Esophagus muscularis mucosa (tissue), 4 donors: ENCODE measurements at regions of chr2 and their contacts with region 1.

Region 1: DNA sequence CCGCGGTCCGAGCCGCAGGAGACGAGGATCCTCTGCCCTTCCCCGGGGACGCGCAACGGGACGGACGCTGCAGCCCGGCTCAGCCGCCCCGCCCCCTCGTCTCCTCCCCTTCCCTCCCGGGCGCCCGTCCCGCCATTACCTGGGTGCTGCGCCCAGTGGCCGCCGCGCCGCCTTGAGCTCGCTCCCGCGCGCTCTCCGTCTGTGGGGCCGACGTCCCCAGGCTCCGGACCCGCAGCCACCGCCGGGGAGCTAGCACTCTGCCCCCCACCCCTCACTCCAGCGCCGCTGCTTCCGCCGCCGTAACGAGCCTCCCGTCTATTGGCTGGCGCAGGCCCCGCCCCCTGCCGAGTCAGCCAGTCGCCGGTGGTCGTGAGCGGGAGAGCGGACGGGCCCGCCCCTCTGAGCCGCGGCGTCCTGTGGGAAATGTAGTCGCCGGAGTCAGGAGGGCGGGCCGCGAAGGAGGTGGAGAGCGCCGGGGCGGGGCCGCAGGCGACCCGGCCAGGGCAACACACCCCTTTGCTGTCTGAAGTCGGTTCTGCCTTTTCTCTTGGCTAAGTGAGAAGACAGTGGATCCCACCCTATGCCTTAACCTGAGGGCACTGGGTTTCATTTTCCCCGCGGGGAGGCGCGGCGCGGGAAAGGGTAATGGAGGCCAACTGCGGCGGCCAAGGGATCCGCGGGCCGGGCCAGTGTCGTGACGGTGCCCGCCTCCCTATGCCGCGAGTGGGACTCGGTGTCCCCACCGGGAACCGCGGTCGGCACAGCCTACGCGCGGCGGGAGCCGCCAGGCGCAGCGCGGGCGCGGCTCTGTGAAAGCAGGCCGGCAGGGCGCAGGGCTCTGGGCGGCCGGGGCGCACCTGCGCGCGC is at the start of gene SAP130:
- DNase-seq: peak; percentile 99
- H3K4me3 ChIP-seq: peak within 1 kb of the TSS; percentile 87 to 98 (median 95)
- H3K27ac ChIP-seq: peak within 1 kb of the TSS; percentile 95 to 99 (median 96)
- H3K4me1 ChIP-seq: peaks cover 12 to 26% (median 21%) of the 10 kb centered on the region in 4 donors
- H3K27me3 ChIP-seq: peaks cover 0 to 4% (median 0%) of the 10 kb centered on the region in 4 donors
- CTCF ChIP-seq: no peak
- EP300 ChIP-seq: no peak
- POLR2A ChIP-seq: peak; percentile 34
- total RNA-seq, gene SAP130: 6.8 to 12.3 (median 10.7) TPM

Region 2: GRCh38 chr2:127884436-127885345 is 143.3 kb before region 1 on chr2:
- intact Hi-C with region 1: loop called (anchors 5 kb)
- DNase-seq: no peak
- H3K4me3 ChIP-seq: peak overlapping the region; percentile 66 to 83 (median 71)
- H3K27ac ChIP-seq: peak overlapping the region; percentile 88 to 93 (median 92)
- H3K4me1 ChIP-seq: peaks cover 50 to 69% (median 66%) of the 10 kb centered on the region in 4 donors
- H3K27me3 ChIP-seq: no peaks in the 10 kb centered on the region
- CTCF ChIP-seq: no peak
- EP300 ChIP-seq: no peak
- POLR2A ChIP-seq: no peak

Region 3: DNA sequence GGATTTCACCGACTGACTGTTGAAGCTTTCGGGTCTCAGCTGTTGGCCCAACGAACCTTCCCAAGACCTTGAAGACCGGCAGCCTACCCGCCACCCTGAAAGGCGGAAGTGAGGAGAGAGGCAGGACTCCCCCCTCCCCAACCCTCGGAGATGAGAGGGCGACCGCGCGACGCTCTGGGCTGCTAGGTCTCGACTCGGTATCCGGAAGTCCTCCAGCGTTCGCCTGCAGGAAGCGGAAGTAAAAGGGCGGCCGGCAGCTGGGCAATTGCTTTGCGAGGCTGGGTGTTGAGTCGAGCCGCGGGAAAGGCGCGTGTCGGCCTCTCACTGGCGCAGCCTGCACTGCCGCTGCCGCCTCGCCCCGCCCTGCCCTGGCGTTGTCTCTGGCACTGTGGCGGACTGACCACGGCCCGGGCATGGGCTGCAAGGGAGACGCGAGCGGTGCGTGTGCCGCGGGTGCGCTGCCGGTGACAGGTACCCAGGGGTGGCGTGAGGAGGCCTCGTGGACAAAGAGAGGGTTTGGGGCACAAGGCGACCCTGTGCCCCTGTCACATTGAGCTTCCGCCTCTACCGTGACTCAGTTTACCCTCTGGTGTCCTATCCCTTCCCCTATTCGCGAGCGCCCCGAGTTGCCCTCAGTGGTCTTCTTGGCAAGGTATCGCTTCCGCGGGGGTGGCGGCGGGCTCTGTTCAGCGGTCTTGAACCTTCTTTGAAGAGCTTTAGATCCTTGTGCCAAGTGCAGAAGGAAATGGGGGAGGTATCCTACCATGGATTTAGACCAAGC is 63.1 kb after region 1 on chr2 and contains the start of gene UGGT1:
- intact Hi-C with region 1: loop called (anchors 5 kb)
- DNase-seq: peak; percentile 97
- H3K4me3 ChIP-seq: peak within 1 kb of the TSS; percentile 72 to 97 (median 92)
- H3K27ac ChIP-seq: peak within 1 kb of the TSS; percentile 75 to 89 (median 88)
- H3K4me1 ChIP-seq: peaks cover 8 to 39% (median 22%) of the 10 kb centered on the region in 4 donors
- H3K27me3 ChIP-seq: no peaks in the 10 kb centered on the region
- CTCF ChIP-seq: peak in 1 of 3 experiments; percentile 11
- EP300 ChIP-seq: no peak
- POLR2A ChIP-seq: peak; percentile 67
- total RNA-seq, gene UGGT1: 27.0 to 32.4 (median 27.6) TPM

Region 4: GRCh38 chr2:128134573-128134972 is 106.5 kb after region 1 on chr2:
- intact Hi-C with region 1: no loop called
- DNase-seq: no peak
- H3K4me3 ChIP-seq: no peak overlapping the region
- H3K27ac ChIP-seq: no peak overlapping the region
- H3K4me1 ChIP-seq: no peaks in the 10 kb centered on the region
- H3K27me3 ChIP-seq: no peaks in the 10 kb centered on the region
- CTCF ChIP-seq: no peak
- EP300 ChIP-seq: no peak
- POLR2A ChIP-seq: no peak